ENCODE measurements at regions of chr13 and their contacts with region 1.

Region 1: GRCh38 chr13:26482451-26483197 is 74.9 kb upstream of the WASF3 start:
- DNase-seq: peak; percentile 63 to 71
- H3K4me3 ChIP-seq: no peak overlapping the region
- H3K4me3 Mint-ChIP-seq: no peak overlapping the region
- H3K27ac Mint-ChIP-seq: no peak overlapping the region
- H3K4me1 ChIP-seq: peaks cover 12% of the 10 kb centered on the region; the same call in 1 of the 2 replicates
- H3K4me1 Mint-ChIP-seq: peaks cover 8% of the 10 kb centered on the region
- H3K27me3 ChIP-seq: no peaks in the 10 kb centered on the region
- H3K27me3 Mint-ChIP-seq: no peaks in the 10 kb centered on the region
- CTCF ChIP-seq: peak; percentile 77 to 88

Region 2: DNA sequence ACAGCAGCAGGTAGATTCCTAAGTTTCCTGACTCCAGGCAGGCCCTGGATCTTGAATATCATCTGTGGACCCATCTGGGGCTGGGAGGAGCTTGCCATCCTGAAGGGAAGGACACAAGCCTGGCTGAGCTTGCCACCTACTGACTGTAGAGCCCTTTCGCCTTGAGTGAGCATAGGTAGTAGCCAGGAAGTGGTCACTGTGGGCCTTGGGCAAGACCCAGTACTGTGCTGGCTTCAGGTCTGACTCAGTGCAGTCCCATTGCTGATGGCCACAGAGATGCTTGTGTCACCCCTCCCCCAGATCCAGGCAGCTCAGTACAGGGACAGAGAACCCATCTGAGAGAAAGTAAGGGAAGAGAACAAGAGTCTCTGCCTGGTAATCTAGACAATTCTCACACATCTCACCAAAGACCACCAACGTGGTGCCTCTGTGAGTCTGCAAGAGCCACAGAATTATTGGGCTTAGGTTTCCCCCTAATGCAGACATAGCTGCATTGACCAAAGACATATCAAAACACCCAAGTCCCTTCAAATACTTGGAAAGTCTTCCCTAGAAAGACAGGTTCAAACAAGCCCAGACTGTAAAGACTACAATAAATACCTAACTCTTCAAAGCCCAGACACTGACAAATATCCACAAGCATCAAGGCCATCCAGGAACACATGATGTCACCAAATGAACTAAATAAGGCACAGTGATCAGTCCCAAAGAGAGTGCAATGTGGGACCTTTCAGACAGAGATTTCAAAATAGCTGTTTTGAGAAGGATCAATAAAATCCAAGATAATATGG is 33.4 kb before region 1 on chr13:
- CTCF ChIA-PET with region 1: no interaction called
- POLR2A ChIA-PET with region 1: no interaction called
- intact Hi-C with region 1: no loop called
- DNase-seq: peak; percentile 20 to 55
- H3K4me3 ChIP-seq: no peak overlapping the region
- H3K4me3 Mint-ChIP-seq: no peak overlapping the region
- H3K27ac Mint-ChIP-seq: no peak overlapping the region
- H3K4me1 ChIP-seq: no peaks in the 10 kb centered on the region
- H3K4me1 Mint-ChIP-seq: no peaks in the 10 kb centered on the region
- H3K27me3 ChIP-seq: no peaks in the 10 kb centered on the region
- H3K27me3 Mint-ChIP-seq: peaks cover 5% of the 10 kb centered on the region
- CTCF ChIP-seq: no peak

Region 3: GRCh38 chr13:26601669-26602068 is 119.0 kb after region 1 on chr13:
- CTCF ChIA-PET with region 1: no interaction called
- POLR2A ChIA-PET with region 1: no interaction called
- intact Hi-C with region 1: loop called (anchors 5 kb)
- DNase-seq: no peak
- H3K4me3 ChIP-seq: no peak overlapping the region
- H3K4me3 Mint-ChIP-seq: no peak overlapping the region
- H3K27ac Mint-ChIP-seq: no peak overlapping the region
- H3K4me1 ChIP-seq: no peaks in the 10 kb centered on the region
- H3K4me1 Mint-ChIP-seq: no peaks in the 10 kb centered on the region
- H3K27me3 ChIP-seq: no peaks in the 10 kb centered on the region
- H3K27me3 Mint-ChIP-seq: peaks cover 27% of the 10 kb centered on the region
- CTCF ChIP-seq: peak in 1 of 2 experiments; percentile 10

Region 4: DNA sequence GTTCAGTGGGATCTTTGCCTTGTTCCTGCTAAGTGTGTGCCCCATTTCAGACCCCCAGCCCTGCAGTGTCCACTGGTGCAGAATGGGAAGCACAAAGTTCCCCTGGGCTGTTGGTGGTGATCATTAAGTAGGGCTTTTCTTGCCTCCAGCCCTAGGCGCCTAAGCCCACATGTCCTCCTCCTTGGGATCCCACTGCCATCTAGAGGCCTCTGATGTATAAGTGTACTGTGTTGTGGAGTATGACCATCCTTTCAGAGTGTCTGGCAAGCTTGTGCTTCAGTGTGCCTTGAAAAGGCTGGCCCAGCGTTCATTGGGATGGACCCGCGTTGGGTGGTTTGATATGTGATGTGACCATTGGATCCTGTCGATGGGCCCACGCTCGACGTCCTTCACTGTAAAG is 146.1 kb after region 1 on chr13:
- CTCF ChIA-PET with region 1: no interaction called
- POLR2A ChIA-PET with region 1: no interaction called
- intact Hi-C with region 1: loop called (anchors 2 kb)
- DNase-seq: peak in 1 of 2 experiments; percentile 42
- H3K4me3 ChIP-seq: no peak overlapping the region
- H3K4me3 Mint-ChIP-seq: no peak overlapping the region
- H3K27ac Mint-ChIP-seq: no peak overlapping the region
- H3K4me1 ChIP-seq: no peaks in the 10 kb centered on the region
- H3K4me1 Mint-ChIP-seq: no peaks in the 10 kb centered on the region
- H3K27me3 ChIP-seq: no peaks in the 10 kb centered on the region
- H3K27me3 Mint-ChIP-seq: peaks cover 8% of the 10 kb centered on the region
- CTCF ChIP-seq: peak in 1 of 2 experiments; percentile 29

Measured in Caco-2 (cell line).